ENCODE measurements at regions of chr1 and their contacts with region 1.

Region 1: GRCh38 chr1:46616277-46617107 is at the start of gene MOB3C:
- DNase-seq: peak; percentile 90 to 94 (median 91)
- ATAC-seq: peak; percentile 86 to 95 (median 92)
- H3K4me3 ChIP-seq: peak within 1 kb of the TSS; percentile 59 to 95 (median 77)
- H3K27ac ChIP-seq: peak within 1 kb of the TSS; percentile 84 to 97 (median 92)
- H3K4me1 ChIP-seq: peaks cover 7 to 54% (median 49%) of the 10 kb centered on the region in 12 donors
- H3K27me3 ChIP-seq: no peaks in the 10 kb centered on the region
- CTCF ChIP-seq: no peak
- POLR2A ChIP-seq: peak; percentile 80 to 94
- total RNA-seq, gene MOB3C: 6.9 to 24.0 (median 11.2) TPM

Region 2: DNA sequence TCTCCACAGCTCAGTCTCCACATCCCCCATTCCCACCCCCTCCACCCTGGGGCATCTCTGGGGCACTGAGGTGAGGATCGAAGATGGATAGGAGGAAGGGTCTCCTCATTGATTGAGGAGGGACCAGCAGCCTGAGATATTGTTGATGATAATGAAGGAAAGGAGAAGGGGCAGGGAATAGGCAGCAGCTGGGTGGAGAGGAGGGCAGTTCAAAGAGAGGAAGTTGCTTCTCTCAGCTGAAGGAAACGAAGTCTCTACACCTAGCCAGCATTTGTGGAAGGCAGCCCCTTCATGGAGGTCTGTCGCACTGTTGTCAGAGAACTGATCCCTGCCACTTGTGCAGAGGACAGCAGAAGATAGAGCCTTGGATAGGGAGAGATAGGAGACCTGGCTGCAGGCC is 70.7 kb before region 1 on chr1:
- intact Hi-C with region 1: no loop called
- DNase-seq: peak in 1 of 5 donors; percentile 5
- ATAC-seq: no peak
- H3K4me3 ChIP-seq: no peak overlapping the region
- H3K27ac ChIP-seq: no peak overlapping the region
- H3K4me1 ChIP-seq: peaks cover 0 to 8% (median 0%) of the 10 kb centered on the region in 12 donors
- H3K27me3 ChIP-seq: peaks cover 11 to 64% (median 32%) of the 10 kb centered on the region in 9 donors
- CTCF ChIP-seq: no peak
- POLR2A ChIP-seq: no peak

Region 3: GRCh38 chr1:46556822-46557221 is 59.7 kb before region 1 on chr1:
- intact Hi-C with region 1: no loop called
- DNase-seq: no peak
- ATAC-seq: peak; percentile 57 to 73 (median 65)
- H3K4me3 ChIP-seq: no peak overlapping the region
- H3K27ac ChIP-seq: no peak overlapping the region
- H3K4me1 ChIP-seq: peaks cover 0 to 3% (median 0%) of the 10 kb centered on the region in 12 donors
- H3K27me3 ChIP-seq: no peaks in the 10 kb centered on the region
- CTCF ChIP-seq: no peak
- POLR2A ChIP-seq: no peak

Region 4: DNA sequence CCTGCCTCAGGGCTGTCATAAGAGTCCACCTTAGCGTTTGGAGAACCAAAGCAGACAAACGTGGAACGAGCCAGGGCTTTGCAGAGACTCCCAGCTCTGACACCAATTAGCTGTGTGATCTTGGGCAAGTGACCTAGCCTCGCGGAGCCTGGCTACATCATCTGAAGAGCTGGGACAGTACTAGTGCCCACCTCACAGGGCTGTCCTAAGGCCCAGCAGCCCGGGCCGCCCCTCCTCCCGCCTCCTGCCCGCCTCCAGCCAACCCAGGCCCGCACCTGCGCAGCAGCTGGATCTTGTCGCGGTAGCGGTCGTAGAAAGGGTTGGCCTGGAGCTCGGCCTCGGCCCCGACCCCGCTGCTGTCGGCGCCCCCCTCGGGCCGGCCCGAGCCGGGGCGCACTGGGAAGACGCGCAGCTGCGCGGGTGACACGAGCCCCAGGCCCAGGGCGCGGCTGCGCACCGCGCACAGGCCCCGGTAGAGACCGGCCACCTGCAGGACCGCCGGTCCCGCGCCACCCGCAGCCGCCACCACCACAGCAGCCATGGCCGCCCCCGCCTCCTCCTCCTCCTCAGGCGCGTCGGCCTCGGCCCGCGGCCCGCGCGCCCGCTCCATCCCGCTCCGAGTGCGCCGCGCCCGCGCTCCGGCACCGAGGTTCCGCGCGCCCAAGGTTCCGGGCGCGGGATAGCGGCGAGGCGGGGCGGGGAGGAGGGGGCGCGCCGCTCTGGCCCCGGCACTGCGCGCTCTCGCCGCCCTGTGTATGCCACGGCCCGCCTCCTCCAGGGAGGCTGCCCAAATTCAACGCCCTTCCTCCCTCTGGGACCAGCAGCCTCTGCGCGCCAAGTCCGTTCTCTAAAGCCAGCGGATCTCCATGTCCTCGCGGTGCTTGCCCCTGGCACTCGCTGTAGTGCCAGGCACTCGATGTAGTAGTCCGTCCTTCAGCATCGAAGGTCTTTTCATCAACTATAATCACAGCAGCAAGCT is 51.6 kb after region 1 on chr1 and contains the start of gene ATPAF1:
- intact Hi-C with region 1: loop called in 3 of 10 experiments (anchors 5 to 10 kb)
- DNase-seq: peak; percentile 71 to 86 (median 80)
- ATAC-seq: peak; percentile 73 to 94 (median 90)
- H3K4me3 ChIP-seq: peak within 1 kb of the TSS; percentile 66 to 98 (median 92)
- H3K27ac ChIP-seq: peak within 1 kb of the TSS; percentile 74 to 92 (median 83)
- H3K4me1 ChIP-seq: peaks cover 4 to 31% (median 22%) of the 10 kb centered on the region in 12 donors
- H3K27me3 ChIP-seq: no peaks in the 10 kb centered on the region
- CTCF ChIP-seq: peak in 1 of 12 donors; percentile 5
- POLR2A ChIP-seq: peak in 1 of 2 donors; percentile 42
- total RNA-seq, gene ATPAF1: 147 to 237 (median 179) TPM